Ovary (tissue), 10 donors: ENCODE measurements at regions of chr7 and their contacts with region 1.

Region 1: GRCh38 chr7:75639071-75639885 is 99.5 kb downstream of the HIP1 start:
- DNase-seq: peak; percentile 58 to 79 (median 76)
- H3K4me3 ChIP-seq: peak overlapping the region; percentile 56
- H3K27ac ChIP-seq: peak overlapping the region; percentile 16 to 50
- H3K4me1 ChIP-seq: peaks cover 8% of the 10 kb centered on the region
- H3K27me3 ChIP-seq: no peaks in the 10 kb centered on the region
- CTCF ChIP-seq: no peak
- EP300 ChIP-seq: no peak
- POLR2A ChIP-seq: peak; percentile 5

Region 2: DNA sequence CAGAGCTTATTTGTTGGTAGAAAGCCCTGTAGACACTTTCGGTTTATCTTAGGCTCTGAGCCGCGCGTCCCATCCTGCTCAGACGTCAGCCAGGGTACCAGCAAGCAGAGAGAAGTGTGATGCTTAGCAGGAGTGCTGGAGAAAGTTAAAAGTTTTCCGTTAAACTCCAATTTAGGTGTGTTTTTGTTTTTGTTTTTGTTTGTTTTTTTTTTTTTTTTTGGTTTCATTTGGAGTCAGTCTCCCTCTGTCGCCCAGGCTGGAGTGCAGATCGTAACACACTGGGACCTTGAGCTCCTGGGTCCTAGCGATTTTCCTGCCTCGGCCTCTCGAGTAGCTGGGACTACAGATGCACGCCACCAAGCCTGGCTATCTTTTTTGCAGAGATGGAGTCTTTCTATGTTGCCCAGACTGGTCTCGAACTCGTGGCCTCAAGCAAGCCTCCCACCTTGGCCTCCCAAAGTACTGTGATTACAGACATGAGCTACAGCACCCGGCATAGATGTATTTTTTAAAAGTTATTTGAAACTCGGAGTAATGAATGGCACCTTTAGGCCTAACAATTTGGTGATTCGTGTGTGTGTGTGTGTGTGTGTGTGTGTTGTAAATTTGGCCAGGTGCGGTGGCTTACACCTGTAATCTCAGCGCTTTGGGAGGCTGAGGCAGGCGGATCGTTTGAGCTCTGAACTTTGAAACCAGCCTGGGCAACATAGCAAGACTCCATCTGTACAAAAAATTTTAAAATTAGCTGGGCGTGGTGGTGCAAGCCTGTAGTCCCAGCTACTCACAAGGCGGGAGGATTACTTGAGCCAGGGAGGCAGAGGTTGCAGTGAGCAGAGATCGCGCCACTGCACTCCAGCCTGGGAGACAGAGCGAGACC is 100.8 kb after region 1 on chr7:
- intact Hi-C with region 1: loop called in 1 of 4 experiments (anchors 10 kb)
- DNase-seq: peak in 1 of 5 donors; percentile 28
- H3K4me3 ChIP-seq: peak overlapping the region; percentile 53
- H3K27ac ChIP-seq: peak overlapping the region; percentile 66 to 87
- H3K4me1 ChIP-seq: no peaks in the 10 kb centered on the region
- H3K27me3 ChIP-seq: no peaks in the 10 kb centered on the region
- CTCF ChIP-seq: no peak
- EP300 ChIP-seq: no peak
- POLR2A ChIP-seq: no peak